ENCODE measurements at regions of chr5 and their contacts with region 1.

Region 1: GRCh38 chr5:15334551-15335266 is 165.3 kb upstream of the FBXL7 start:
- DNase-seq: no peak
- ATAC-seq: no peak
- H3K4me3 ChIP-seq: no peak overlapping the region
- H3K27ac ChIP-seq: no peak overlapping the region
- H3K4me1 ChIP-seq: no peaks in the 10 kb centered on the region
- H3K27me3 ChIP-seq: no peaks in the 10 kb centered on the region
- CTCF ChIP-seq: no peak

Region 2: DNA sequence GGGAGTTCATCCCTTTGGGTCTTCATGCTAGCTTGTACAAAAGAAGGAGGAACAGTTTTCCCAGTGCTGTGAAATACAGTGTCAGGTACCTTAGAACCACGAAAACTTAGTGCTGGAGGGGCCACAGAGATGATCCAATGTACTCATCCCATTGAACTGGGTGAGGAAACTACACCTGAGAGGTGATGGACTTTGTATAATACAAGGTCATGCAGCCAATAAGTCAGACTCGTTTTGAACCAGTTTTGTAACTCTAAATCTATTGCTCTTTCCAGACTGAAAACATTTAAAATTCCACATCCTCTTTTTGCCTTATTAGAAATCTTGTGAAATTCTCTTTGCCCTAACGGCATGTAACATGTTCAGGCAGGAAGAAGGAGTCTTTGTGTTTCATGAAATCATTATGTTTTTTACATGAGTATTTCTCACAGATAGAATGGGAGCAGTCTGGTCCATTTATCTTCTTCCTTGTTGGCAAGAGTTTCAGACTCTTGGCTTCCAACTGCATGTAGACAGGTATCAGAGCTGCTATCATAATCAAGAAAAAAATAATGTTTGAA is 18.5 kb after region 1 on chr5:
- intact Hi-C with region 1: loop called in 1 of 10 experiments (anchors 2 kb)
- DNase-seq: no peak
- ATAC-seq: no peak
- H3K4me3 ChIP-seq: no peak overlapping the region
- H3K27ac ChIP-seq: no peak overlapping the region
- H3K4me1 ChIP-seq: no peaks in the 10 kb centered on the region
- H3K27me3 ChIP-seq: no peaks in the 10 kb centered on the region
- CTCF ChIP-seq: no peak

Measured in heart right ventricle (tissue), 16 donors.